ENCODE measurements at regions of chr22 and their contacts with region 1.

Region 1: GRCh38 chr22:30423982-30424963 is 1.3 kb upstream of the MTFP1 start:
- DNase-seq: peak; percentile 93
- ATAC-seq: peak; percentile 95
- H3K4me3 Mint-ChIP-seq: peak overlapping the region; percentile 98
- H3K27ac Mint-ChIP-seq: peak overlapping the region; percentile 98
- H3K4me1 Mint-ChIP-seq: peaks cover 44% of the 10 kb centered on the region
- H3K27me3 Mint-ChIP-seq: no peaks in the 10 kb centered on the region

Region 2: DNA sequence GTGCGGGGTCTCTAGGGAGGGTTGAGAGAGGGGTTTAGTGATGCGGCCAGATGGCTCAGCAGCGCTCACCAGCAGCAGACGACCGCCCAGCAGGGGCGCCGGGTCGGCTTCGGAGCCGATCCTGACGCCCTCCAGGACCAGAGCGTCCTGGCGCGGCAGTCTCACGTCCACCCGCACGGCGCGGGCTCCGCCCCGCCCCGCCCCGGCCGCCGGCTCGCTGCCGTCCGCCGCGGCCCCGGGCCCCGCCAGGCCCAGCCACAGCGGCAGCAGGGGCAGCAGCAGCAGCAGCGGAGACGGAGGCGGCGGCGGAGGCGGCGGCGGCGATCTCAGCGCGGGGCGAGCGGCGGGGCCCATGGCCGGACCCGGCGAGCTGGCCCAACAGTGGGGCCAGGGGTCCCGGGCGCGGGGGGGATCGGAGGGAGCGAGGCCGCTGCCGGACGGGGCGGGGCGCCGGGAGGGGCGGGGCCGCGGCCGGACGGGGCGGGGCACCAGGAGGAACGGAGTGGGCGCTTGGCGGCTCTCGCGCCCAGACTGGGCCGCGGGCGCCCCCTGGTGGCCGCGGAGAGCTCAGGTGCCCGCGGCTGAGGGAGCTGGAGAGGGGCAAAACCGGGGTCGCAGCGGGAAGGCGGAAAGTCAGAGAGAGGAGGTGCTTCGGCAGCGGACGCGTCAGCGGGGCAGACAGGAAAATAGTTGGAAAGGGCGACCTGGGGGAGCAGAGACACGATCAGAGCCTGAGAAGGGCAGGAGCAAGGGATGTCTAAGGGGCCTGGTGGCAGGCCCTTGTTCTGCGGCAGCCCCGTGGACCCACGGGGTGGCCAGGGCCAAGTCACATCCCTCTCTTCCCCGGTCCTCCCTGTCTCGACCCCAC is 37.1 kb before region 1 on chr22 and contains the start of gene RNF215:
- POLR2A ChIA-PET with region 1: interaction called, 156 read pairs
- DNase-seq: peak; percentile 95
- ATAC-seq: peak; percentile 79
- H3K4me3 Mint-ChIP-seq: peak within 1 kb of the TSS; percentile 88
- H3K27ac Mint-ChIP-seq: peak within 1 kb of the TSS; percentile 90
- H3K4me1 Mint-ChIP-seq: peaks cover 21% of the 10 kb centered on the region
- H3K27me3 Mint-ChIP-seq: no peaks in the 10 kb centered on the region
- total RNA-seq, gene RNF215: 11.1 to 11.3 TPM

Region 3: GRCh38 chr22:30402028-30402765 is 22.1 kb before region 1 on chr22:
- POLR2A ChIA-PET with region 1: interaction called, 156 read pairs
- DNase-seq: no peak
- ATAC-seq: no peak
- H3K4me3 Mint-ChIP-seq: no peak overlapping the region
- H3K27ac Mint-ChIP-seq: no peak overlapping the region
- H3K4me1 Mint-ChIP-seq: peaks cover 23% of the 10 kb centered on the region
- H3K27me3 Mint-ChIP-seq: no peaks in the 10 kb centered on the region

Region 4: DNA sequence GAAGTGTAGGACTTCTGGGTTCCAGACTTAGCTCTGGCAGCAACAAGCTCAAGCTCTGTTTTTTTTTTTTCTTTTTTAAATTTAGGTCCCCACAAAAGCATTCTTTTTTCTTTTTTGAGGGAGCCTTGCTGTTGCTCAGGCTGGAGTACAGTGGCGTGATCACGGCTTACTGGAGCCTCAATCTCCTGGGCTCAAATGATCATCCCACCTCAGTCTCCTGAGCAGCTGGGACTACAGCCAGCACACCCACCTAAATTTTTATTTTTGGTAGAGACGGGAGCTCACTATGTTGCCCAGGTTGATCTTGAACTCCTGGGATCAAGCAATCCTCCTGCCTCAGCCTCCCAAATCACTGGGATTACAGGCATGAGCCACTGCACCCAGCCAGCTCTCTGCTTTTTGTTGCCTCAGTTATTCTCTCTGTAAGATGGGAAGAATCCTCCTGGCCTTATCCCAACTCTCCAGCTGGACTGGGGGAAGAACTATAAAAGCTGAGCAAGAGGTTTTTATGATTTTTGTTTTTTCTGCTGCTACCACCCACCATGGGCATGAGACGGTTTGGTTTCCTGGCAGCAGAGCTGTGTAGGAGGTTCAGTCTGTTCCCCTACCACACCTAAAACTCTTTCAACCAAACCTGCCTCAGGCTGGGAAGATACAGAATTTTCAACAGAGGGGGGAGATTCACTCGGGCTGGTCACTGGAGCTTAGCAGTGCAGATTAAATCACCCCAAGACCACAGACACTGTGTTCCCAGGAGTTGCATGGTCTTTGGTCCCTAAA is 10.3 kb before region 1 on chr22:
- POLR2A ChIA-PET with region 1: interaction called, 39 read pairs
- DNase-seq: no peak
- ATAC-seq: no peak
- H3K4me3 Mint-ChIP-seq: no peak overlapping the region
- H3K27ac Mint-ChIP-seq: no peak overlapping the region
- H3K4me1 Mint-ChIP-seq: peaks cover 14% of the 10 kb centered on the region
- H3K27me3 Mint-ChIP-seq: no peaks in the 10 kb centered on the region

Region 5: DNA sequence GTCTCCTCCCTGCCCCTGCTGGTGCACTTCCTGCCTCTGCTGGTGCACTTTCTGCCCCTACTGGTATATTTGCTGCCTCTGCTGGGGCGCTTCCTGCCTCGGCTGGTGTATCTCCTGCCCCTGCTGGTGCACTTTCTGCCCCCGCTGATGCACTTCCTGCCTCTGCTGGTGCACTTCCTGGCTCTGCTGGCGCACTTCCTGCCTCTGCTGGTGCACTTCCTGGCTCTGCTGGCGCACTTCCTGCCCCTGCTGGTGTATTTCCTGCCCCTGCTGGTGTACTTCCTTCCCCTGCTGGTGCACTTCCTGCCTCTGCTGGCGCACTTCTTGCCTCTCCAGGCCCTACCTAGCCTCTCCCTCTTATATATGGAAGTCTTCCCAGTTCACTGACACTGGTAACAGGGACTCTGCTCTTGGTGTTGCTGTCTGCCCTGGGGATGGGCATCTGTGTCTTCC is 11.4 kb after region 1 on chr22:
- POLR2A ChIA-PET with region 1: interaction called, 34 read pairs
- DNase-seq: peak; percentile 75
- ATAC-seq: peak; percentile 93
- H3K4me3 Mint-ChIP-seq: peak overlapping the region; percentile 83
- H3K27ac Mint-ChIP-seq: peak overlapping the region; percentile 93
- H3K4me1 Mint-ChIP-seq: peaks cover 19% of the 10 kb centered on the region
- H3K27me3 Mint-ChIP-seq: peaks cover 13% of the 10 kb centered on the region